ENCODE measurements at regions of chr11 and their contacts with region 1.

Region 1: DNA sequence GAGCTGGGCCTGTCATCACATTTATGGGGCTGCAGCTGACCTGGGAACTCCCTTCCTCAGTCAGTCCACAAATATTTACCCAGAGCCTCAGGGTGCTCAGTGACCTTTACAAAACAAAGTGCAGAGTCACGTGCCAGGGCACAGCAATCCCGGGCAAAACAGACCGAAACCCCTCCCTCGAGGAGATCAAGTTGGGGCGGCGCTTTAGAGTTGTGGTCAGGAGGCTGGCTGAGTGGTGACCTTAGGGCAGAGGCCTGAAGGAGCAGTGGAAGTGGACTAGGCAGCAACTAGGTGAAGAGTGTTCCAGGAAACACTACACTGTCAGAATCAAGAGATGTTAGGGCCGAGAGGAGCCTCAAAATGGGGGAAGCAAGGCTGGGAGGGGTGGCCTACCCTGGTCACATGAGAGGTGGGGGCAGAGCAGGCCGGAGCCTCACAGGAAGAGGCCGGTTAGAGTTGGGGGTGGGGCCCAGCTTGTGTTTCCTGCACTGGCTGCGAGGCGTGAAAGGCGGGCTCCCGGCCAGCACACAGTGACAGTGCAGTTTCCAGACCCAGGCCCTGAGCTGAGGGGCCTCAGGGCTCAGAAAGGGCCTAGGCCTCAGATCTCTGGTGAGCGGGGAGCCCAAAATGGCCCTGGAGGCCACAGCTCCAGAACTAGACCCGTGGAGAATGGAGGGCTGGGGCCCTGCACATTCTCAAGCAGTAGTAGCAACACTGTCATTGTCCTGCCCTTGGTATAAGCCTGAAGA is 3.7 kb upstream of the NEAT1 start:
- DNase-seq: peak; percentile 94 to 98
- H3K4me3 ChIP-seq: peak overlapping the region; percentile 56 to 80
- H3K27ac ChIP-seq: peak overlapping the region; percentile 97 to 99
- H3K4me1 ChIP-seq: peaks cover 32 to 46% of the 10 kb centered on the region in 2 donors
- H3K27me3 ChIP-seq: no peaks in the 10 kb centered on the region
- CTCF ChIP-seq: no peak

Region 2: GRCh38 chr11:65382033-65382807 is 36.7 kb before region 1 on chr11 and contains the start of gene SLC25A45:
- intact Hi-C with region 1: loop called (anchors 1 kb)
- DNase-seq: peak; percentile 91 to 98
- H3K4me3 ChIP-seq: peak within 1 kb of the TSS; percentile 31 to 63
- H3K27ac ChIP-seq: peak within 1 kb of the TSS; percentile 95 to 97
- H3K4me1 ChIP-seq: peaks cover 10 to 34% of the 10 kb centered on the region in 2 donors
- H3K27me3 ChIP-seq: no peaks in the 10 kb centered on the region
- CTCF ChIP-seq: peak; percentile 80 to 98 (median 88)
- total RNA-seq, gene SLC25A45: 11.4 TPM

Region 3: DNA sequence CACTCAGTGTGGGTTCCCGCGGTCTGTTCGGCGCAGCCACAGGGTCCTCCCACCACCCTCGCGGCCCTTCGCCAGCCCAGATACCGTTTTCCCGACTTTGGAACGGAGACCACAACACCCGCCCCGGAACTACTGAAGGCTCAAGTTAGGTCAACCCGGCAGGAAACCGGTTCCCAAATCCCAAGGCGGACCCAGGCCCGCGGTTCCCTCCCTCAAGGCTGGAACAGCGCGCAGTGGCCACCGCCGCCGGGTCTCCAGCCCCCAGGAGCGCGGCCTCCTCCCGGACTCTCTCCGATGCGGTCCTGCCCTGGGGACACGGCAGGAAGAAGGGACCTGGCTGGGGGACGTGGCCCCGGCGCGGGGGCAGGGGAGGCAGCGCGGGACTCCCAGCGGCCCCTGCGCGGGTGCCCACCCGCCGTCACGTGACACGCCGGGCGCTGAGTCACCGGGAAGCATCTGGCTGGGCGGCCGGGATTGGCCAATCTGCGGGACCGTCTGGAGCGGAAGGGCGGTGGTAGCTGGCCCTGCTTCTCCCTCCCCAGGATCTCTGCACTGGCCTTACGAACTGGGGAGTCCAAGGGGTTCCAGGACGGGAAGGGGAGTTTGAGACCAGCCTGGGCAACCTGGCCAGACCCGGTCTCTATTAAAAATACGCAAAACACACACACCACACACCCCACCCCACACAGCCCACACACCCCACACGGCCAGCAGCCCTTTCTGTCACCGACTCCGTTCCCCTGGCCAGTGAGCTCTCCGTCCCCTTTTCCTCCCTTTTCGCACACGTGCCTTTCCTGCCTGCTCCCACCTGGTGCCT is 58.5 kb after region 1 on chr11:
- intact Hi-C with region 1: loop called (anchors 2 kb)
- DNase-seq: peak; percentile 88 to 98
- H3K4me3 ChIP-seq: peak overlapping the region; percentile 73 to 76
- H3K27ac ChIP-seq: peak overlapping the region; percentile 97 to 98
- H3K4me1 ChIP-seq: peaks cover 28 to 66% of the 10 kb centered on the region in 2 donors
- H3K27me3 ChIP-seq: no peaks in the 10 kb centered on the region
- CTCF ChIP-seq: no peak

Region 4: GRCh38 chr11:65497141-65498041 is 78.5 kb after region 1 on chr11:
- intact Hi-C with region 1: loop called (anchors 2 kb)
- DNase-seq: peak; percentile 94 to 99
- H3K4me3 ChIP-seq: peak overlapping the region; percentile 62 to 67
- H3K27ac ChIP-seq: peak overlapping the region; percentile 95 to 99
- H3K4me1 ChIP-seq: peaks cover 29 to 44% of the 10 kb centered on the region in 2 donors
- H3K27me3 ChIP-seq: no peaks in the 10 kb centered on the region
- CTCF ChIP-seq: no peak

Region 5: DNA sequence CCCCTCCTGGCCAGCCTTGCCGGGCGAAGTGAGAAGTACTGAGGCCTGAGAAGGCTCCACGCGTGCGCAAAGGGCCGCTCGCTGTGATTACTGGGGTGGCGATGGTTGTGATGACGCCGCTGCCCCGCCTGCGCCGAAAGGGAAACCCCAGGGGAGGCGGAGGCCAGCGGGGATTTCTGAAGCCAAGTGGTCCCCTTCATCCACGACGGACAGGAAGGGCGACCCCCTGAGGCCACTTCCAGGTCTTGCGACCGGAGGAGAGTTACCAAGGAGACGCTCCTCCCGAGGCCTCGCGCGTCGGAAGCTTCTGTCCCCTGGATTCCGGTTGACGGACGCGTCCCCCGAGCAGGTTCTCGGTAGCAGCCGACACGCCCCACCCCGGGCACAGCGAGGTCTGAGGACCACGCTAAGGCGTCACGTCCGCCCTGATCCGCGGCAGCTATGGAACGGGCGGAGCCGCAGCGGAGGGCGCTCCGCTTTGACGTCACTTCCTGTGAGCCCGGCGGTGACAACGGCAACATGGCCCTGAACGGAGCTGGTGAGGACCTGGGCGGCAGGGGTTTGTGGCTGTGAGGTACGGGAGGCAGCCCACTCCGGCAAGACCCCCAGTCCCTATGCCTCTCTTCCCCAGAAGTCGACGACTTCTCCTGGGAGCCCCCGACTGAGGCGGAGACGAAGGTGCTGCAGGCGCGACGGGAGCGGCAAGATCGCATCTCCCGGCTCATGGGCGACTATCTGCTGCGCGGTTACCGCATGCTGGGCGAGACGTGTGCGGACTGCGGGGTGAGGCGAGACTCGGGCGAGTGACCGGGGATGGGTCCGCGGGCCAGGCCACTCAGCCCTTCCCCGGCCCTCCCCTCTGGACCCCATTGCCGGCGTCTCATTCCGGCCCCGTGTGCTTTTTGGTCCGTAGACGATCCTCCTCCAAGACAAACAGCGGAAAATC is 151.4 kb after region 1 on chr11 and contains the start of gene ZNRD2:
- intact Hi-C with region 1: loop called (anchors 2 kb)
- DNase-seq: peak; percentile 95 to 99
- H3K4me3 ChIP-seq: peak within 1 kb of the TSS; percentile 95 to 98
- H3K27ac ChIP-seq: peak within 1 kb of the TSS; percentile 90 to 99
- H3K4me1 ChIP-seq: peaks cover 30 to 56% of the 10 kb centered on the region in 2 donors
- H3K27me3 ChIP-seq: no peaks in the 10 kb centered on the region
- CTCF ChIP-seq: peak; percentile 37 to 46 (median 45)
- total RNA-seq, gene ZNRD2: 157 TPM